ENCODE measurements at regions of chr7 and their contacts with region 1.

Region 1: GRCh38 chr7:16926283-16926682 is 44.5 kb upstream of the AGR3 start:
- DNase-seq: peak; percentile 78
- ATAC-seq: peak; percentile 57
- H3K4me3 ChIP-seq: 0 out of 2 replicates have a peak overlapping the region, but pooled peaks have one; percentile 19
- H3K27ac ChIP-seq: peak overlapping the region; percentile 87
- H3K4me1 ChIP-seq: peaks cover 64% of the 10 kb centered on the region
- H3K27me3 ChIP-seq: no peaks in the 10 kb centered on the region
- CTCF ChIP-seq: peak; percentile 83

Region 2: GRCh38 chr7:16528520-16528919 is 397.8 kb before region 1 on chr7:
- CTCF ChIA-PET with region 1: no interaction called
- POLR2A ChIA-PET with region 1: no interaction called
- intact Hi-C with region 1: no loop called
- DNase-seq: no peak
- ATAC-seq: no peak
- H3K4me3 ChIP-seq: no peak overlapping the region
- H3K27ac ChIP-seq: no peak overlapping the region
- H3K4me1 ChIP-seq: peaks cover 8% of the 10 kb centered on the region
- H3K27me3 ChIP-seq: no peaks in the 10 kb centered on the region
- CTCF ChIP-seq: no peak

Region 3: GRCh38 chr7:17041324-17041723 is 115.0 kb after region 1 on chr7:
- CTCF ChIA-PET with region 1: no interaction called
- POLR2A ChIA-PET with region 1: no interaction called
- intact Hi-C with region 1: loop called (anchors 5 kb)
- DNase-seq: peak; percentile 87
- ATAC-seq: peak; percentile 71
- H3K4me3 ChIP-seq: peak overlapping the region; percentile 9; the same call in 1 of the 2 replicates
- H3K27ac ChIP-seq: peak overlapping the region; percentile 80
- H3K4me1 ChIP-seq: peaks cover 53% of the 10 kb centered on the region
- H3K27me3 ChIP-seq: no peaks in the 10 kb centered on the region
- CTCF ChIP-seq: no peak

Region 4: DNA sequence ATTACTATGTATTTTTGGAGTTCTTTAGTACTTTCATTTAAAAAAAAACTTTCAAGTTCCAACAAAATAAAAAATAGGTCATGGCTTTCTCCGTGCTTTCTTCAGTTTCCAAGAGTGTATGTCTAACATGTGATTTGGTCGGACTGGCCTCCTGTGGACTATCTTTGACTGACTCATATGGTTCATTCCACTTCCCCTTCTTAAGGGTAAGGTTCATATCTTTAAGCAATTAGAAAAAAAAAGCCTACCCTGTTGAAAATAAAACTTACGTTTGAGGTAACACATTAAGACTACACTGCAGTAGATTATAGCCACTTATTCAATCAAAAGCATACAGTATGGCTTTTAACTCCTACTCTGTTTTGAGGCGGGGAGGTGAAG is 259.4 kb after region 1 on chr7:
- CTCF ChIA-PET with region 1: no interaction called
- POLR2A ChIA-PET with region 1: no interaction called
- intact Hi-C with region 1: loop called (anchors 5 kb)
- DNase-seq: peak; percentile 65
- ATAC-seq: peak; percentile 93
- H3K4me3 ChIP-seq: no peak overlapping the region
- H3K27ac ChIP-seq: peak overlapping the region; percentile 85
- H3K4me1 ChIP-seq: peaks cover 22% of the 10 kb centered on the region
- H3K27me3 ChIP-seq: no peaks in the 10 kb centered on the region
- CTCF ChIP-seq: no peak

Region 5: GRCh38 chr7:17234398-17235031 is 308.2 kb after region 1 on chr7:
- CTCF ChIA-PET with region 1: no interaction called
- POLR2A ChIA-PET with region 1: no interaction called
- intact Hi-C with region 1: loop called (anchors 1 kb)
- DNase-seq: peak; percentile 98
- ATAC-seq: peak; percentile 91
- H3K4me3 ChIP-seq: peak overlapping the region; percentile 52
- H3K27ac ChIP-seq: peak overlapping the region; percentile 93
- H3K4me1 ChIP-seq: peaks cover 32% of the 10 kb centered on the region
- H3K27me3 ChIP-seq: no peaks in the 10 kb centered on the region
- CTCF ChIP-seq: 0 out of 2 replicates have a peak, but pooled peaks have one; percentile 9

Region 6: GRCh38 chr7:17275749-17276671 is 349.7 kb after region 1 on chr7:
- CTCF ChIA-PET with region 1: no interaction called
- POLR2A ChIA-PET with region 1: interaction called, 6 read pairs
- intact Hi-C with region 1: loop called (anchors 1 kb)
- DNase-seq: peak; percentile 92
- ATAC-seq: peak; percentile 91
- H3K4me3 ChIP-seq: peak overlapping the region; percentile 8; the same call in 1 of the 2 replicates
- H3K27ac ChIP-seq: peak overlapping the region; percentile 78
- H3K4me1 ChIP-seq: peaks cover 34% of the 10 kb centered on the region
- H3K27me3 ChIP-seq: no peaks in the 10 kb centered on the region
- CTCF ChIP-seq: no peak

Region 7: DNA sequence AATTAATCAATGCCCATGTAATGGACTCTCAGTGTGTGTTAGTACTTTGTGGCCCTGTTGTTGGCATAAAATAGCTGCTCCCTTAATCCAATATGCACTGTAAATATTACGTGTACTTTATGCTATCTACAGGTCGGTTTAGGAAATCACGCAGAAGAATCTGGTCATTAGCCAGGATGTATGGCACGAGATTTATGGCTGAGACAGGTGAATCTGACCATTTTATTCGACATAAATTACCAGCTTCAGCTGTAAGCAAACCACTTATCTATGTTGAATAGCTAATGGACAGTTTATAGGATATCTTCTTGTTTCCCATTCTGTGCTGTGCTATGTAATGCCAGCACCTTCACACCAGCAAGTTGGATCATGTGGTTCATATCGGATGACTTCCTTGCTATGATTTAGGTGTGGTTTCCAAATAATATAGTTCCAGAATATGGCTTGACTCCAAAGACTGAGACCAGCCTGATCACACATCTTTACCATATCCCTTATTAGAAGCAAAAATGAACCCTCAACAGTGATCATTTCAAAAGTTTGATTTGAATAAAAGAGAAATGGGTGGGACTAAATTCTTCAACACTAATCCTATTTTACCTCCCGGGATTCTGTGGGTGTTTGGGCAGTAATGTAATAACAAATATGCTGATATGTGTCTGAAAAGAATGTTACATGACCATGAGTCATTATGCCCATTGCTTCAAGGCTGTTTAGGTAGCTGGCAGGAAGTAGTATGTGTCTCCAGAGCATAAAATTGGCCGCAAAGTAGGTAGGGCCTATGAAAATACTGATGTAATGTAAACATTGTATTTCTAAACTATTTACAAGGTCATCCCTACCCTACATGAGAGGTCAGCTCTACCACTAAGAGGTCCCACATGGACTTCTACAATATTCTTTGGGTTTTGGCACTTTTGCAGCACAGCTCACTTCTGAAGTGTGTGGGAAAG is 673.7 kb after region 1 on chr7:
- CTCF ChIA-PET with region 1: no interaction called
- POLR2A ChIA-PET with region 1: no interaction called
- intact Hi-C with region 1: loop called (anchors 1 kb)
- DNase-seq: peak; percentile 95
- ATAC-seq: peak; percentile 81
- H3K4me3 ChIP-seq: peak overlapping the region; percentile 36; the same call in 1 of the 2 replicates
- H3K27ac ChIP-seq: peak overlapping the region; percentile 95
- H3K4me1 ChIP-seq: peaks cover 42% of the 10 kb centered on the region
- H3K27me3 ChIP-seq: no peaks in the 10 kb centered on the region
- CTCF ChIP-seq: no peak

Region 8: DNA sequence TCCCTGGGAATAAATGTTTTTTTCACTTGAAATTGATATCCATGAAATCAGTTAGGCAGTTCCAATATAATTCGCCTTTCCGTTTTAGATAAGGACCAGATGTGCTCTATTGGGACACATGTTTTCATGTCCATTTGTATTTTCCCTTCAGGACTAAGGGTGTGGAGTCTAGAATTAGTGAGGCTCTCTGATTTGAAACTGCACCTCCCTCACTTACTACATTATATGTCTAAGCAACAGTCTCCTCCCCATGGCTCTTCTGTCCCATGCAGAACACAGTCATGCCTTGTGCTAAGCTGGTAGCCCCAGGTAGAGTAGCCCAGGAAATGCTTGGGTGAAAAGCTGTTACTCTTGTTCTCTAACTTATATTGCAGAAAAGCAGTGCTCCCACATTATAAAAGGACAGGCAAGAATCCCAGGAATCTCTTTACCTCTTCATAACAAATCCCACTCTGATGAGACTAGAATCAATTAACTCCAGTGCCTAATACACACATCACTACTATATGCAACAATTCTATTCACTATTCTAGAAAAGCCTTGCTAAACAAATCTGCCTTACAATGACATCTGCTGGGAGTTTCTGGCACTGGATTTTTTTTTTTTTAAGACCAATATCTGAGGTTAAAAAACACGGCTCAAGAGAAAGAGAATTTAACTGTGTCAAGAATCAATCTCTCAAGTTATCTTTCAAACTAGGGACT is 720.1 kb after region 1 on chr7:
- CTCF ChIA-PET with region 1: no interaction called
- POLR2A ChIA-PET with region 1: no interaction called
- intact Hi-C with region 1: loop called (anchors 5 kb)
- DNase-seq: peak; percentile 54
- ATAC-seq: peak; percentile 87
- H3K4me3 ChIP-seq: no peak overlapping the region
- H3K27ac ChIP-seq: no peak overlapping the region
- H3K4me1 ChIP-seq: peaks cover 8% of the 10 kb centered on the region
- H3K27me3 ChIP-seq: no peaks in the 10 kb centered on the region
- CTCF ChIP-seq: peak; percentile 77